Heart right ventricle (tissue), 16 donors: ENCODE measurements at regions of chr9 and their contacts with region 1.

Region 1: GRCh38 chr9:11500780-11501179 is 888.0 kb upstream of the PTPRD start:
- DNase-seq: no peak
- ATAC-seq: no peak
- H3K4me3 ChIP-seq: no peak overlapping the region
- H3K27ac ChIP-seq: no peak overlapping the region
- H3K4me1 ChIP-seq: no peaks in the 10 kb centered on the region
- H3K27me3 ChIP-seq: no peaks in the 10 kb centered on the region
- CTCF ChIP-seq: no peak

Region 2: GRCh38 chr9:11443631-11444030 is 57.1 kb before region 1 on chr9:
- intact Hi-C with region 1: no loop called
- DNase-seq: no peak
- ATAC-seq: no peak
- H3K4me3 ChIP-seq: no peak overlapping the region
- H3K27ac ChIP-seq: no peak overlapping the region
- H3K4me1 ChIP-seq: no peaks in the 10 kb centered on the region
- H3K27me3 ChIP-seq: no peaks in the 10 kb centered on the region
- CTCF ChIP-seq: no peak

Region 3: DNA sequence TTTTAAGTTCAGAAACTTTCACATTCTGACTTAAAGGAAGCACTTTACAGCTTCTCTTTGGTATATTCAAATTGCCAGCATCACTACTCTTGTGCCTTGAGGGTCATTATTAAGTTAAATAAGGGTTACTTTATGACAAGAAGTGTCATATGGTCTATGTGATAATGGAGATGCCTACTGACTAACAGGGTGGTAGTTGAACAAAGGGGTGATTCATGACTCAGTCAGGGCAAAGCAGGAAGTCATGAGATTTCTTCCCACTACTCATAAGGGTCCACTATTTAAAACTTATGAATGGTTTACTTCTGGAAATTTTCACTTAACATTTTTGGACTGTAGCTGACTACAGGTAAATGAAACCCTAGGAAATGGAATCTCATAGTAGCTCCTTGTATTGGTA is 50.3 kb after region 1 on chr9:
- intact Hi-C with region 1: loop called in 1 of 10 experiments (anchors 10 kb)
- DNase-seq: no peak
- ATAC-seq: no peak
- H3K4me3 ChIP-seq: no peak overlapping the region
- H3K27ac ChIP-seq: no peak overlapping the region
- H3K4me1 ChIP-seq: no peaks in the 10 kb centered on the region
- H3K27me3 ChIP-seq: no peaks in the 10 kb centered on the region
- CTCF ChIP-seq: no peak